ENCODE measurements at regions of chr4 and their contacts with region 1.

Region 1: DNA sequence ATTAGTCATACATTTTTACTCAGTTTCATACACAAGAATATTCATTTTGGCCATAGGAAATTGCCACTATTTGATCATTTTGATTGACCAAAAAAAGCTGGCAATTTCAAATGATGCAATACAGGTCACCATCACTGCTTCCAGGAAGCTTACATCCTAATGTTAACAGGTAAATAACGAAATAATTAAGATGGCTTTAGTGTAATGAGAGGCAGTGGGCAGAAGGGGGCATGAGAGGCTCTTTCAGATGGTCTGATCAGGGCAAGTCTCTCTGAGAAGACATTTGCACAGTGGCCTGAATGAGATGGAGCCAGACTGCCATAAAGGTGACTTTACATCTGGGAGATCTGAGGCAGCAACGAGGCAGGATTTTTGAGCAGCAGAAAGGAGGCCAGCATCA is 170.7 kb downstream of the SLIT2 start:
- DNase-seq: no peak
- H3K4me3 ChIP-seq: no peak overlapping the region
- H3K27ac ChIP-seq: no peak overlapping the region
- H3K4me1 ChIP-seq: peaks cover 0 to 35% (median 15%) of the 10 kb centered on the region in 4 donors
- H3K27me3 ChIP-seq: no peaks in the 10 kb centered on the region
- CTCF ChIP-seq: peak in 2 of 3 experiments; percentile 52 to 61
- EP300 ChIP-seq: no peak
- POLR2A ChIP-seq: no peak

Region 2: GRCh38 chr4:20305976-20306375 is 116.4 kb before region 1 on chr4:
- intact Hi-C with region 1: loop called (anchors 10 kb)
- DNase-seq: no peak
- H3K4me3 ChIP-seq: no peak overlapping the region
- H3K27ac ChIP-seq: no peak overlapping the region
- H3K4me1 ChIP-seq: no peaks in the 10 kb centered on the region
- H3K27me3 ChIP-seq: no peaks in the 10 kb centered on the region
- CTCF ChIP-seq: peak; percentile 10 to 33 (median 20)
- EP300 ChIP-seq: no peak
- POLR2A ChIP-seq: no peak

Region 3: GRCh38 chr4:20544645-20545044 is 122.2 kb after region 1 on chr4:
- intact Hi-C with region 1: loop called (anchors 5 kb)
- DNase-seq: no peak
- H3K4me3 ChIP-seq: no peak overlapping the region
- H3K27ac ChIP-seq: no peak overlapping the region
- H3K4me1 ChIP-seq: peaks cover 0 to 6% (median 5%) of the 10 kb centered on the region in 4 donors
- H3K27me3 ChIP-seq: no peaks in the 10 kb centered on the region
- CTCF ChIP-seq: peak; percentile 54 to 61 (median 60)
- EP300 ChIP-seq: no peak
- POLR2A ChIP-seq: no peak